ENCODE measurements at regions of chr10 and their contacts with region 1.

Region 1: GRCh38 chr10:15433850-15434537 is 62.9 kb upstream of the FAM171A1 start:
- DNase-seq: peak; percentile 81
- H3K4me3 Mint-ChIP-seq: peak overlapping the region; percentile 85
- H3K27ac Mint-ChIP-seq: no peak overlapping the region
- H3K4me1 Mint-ChIP-seq: peaks cover 5% of the 10 kb centered on the region
- H3K27me3 Mint-ChIP-seq: peaks cover 15% of the 10 kb centered on the region

Region 2: DNA sequence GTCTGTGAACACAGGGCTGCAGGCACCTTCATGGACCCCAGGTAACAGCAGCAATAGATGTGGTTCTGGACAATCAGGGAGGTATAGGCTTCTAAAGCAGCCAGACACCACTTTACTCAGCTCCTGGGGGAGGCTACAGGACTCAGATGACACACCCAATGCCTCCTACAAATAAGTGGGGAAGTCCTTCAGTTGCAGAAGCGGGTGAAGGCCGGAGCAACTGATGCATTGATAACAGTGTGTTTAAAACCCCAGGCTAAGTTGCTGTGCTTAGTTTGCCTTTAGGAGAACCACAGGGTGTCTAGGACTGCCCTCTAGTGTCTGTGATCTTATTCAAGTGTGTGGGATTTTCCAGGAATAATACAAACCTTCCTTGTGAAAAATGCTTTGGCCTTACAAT is 291.6 kb after region 1 on chr10:
- intact Hi-C with region 1: loop called (anchors 5 kb)
- DNase-seq: no peak
- H3K4me3 Mint-ChIP-seq: no peak overlapping the region
- H3K27ac Mint-ChIP-seq: no peak overlapping the region
- H3K4me1 Mint-ChIP-seq: no peaks in the 10 kb centered on the region
- H3K27me3 Mint-ChIP-seq: peaks cover 19% of the 10 kb centered on the region

Region 3: GRCh38 chr10:15824498-15824897 is 390.5 kb after region 1 on chr10:
- intact Hi-C with region 1: loop called (anchors 5 kb)
- DNase-seq: no peak
- H3K4me3 Mint-ChIP-seq: no peak overlapping the region
- H3K27ac Mint-ChIP-seq: no peak overlapping the region
- H3K4me1 Mint-ChIP-seq: no peaks in the 10 kb centered on the region
- H3K27me3 Mint-ChIP-seq: no peaks in the 10 kb centered on the region